ENCODE measurements at regions of chr5 and their contacts with region 1.

Region 1: GRCh38 chr5:146533260-146533857 is 17.4 kb upstream of the GPR151 start:
- DNase-seq: peak; percentile 73
- CTCF ChIP-seq: peak; percentile 83

Region 2: DNA sequence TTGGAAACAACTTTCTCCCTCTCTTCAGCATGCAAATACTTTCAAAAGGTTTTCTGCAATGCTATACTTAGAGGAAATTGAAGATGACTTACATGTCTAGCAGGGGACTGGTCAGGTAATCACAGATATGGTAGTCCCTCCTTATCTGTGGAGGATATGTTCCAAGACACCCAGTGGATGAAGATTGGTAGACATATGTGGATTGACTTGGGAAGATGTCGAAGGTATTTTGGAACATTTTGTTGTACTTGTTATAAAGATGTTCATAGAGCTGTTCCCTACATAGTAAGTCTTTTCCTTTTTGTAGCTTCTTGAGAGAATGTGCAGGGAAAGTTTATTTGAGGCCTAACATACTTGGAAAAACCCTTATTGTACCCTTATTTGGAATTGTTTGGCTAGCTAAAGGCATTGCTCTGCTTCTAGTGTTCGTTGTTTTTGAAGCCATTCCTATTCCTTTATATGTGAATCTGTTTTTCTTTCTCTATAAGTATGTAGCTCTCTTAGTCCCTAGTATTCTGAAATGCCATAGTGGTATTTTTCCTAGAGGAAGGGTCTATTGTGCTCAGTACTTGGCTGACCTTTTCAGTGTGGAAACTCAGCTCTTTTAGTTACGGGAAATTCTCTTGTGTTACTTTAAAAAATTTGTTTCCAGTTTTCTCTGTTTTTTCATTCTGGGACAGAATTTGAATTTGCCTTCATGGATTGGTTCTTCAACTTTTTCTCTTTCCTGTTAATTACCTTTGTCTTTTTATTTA is 43.1 kb before region 1 on chr5:
- CTCF ChIA-PET with region 1: no interaction called
- POLR2A ChIA-PET with region 1: no interaction called
- DNase-seq: no peak
- CTCF ChIP-seq: no peak

Region 3: DNA sequence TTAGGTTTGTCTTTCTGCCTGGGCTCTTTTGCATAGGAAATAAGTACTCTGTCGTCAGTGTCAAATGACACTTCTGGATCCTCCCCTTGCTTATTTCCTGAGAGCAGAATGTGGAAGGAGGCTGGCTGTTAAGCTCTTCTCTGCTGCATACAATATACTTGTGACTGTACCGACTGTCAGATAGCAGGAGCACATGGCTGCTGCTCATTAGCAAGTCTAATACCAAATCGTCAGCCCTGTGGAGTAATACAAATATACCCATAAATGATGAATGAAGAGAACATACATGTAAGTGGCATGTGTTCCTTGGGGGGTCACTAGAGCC is 17.2 kb before region 1 on chr5 and contains the start of gene GPR151:
- CTCF ChIA-PET with region 1: interaction called, 25 read pairs
- POLR2A ChIA-PET with region 1: no interaction called
- DNase-seq: no peak
- CTCF ChIP-seq: no peak

Region 4: GRCh38 chr5:146548781-146549449 is 15.6 kb after region 1 on chr5:
- CTCF ChIA-PET with region 1: interaction called, 75 read pairs
- POLR2A ChIA-PET with region 1: no interaction called
- DNase-seq: no peak
- CTCF ChIP-seq: no peak

Region 5: DNA sequence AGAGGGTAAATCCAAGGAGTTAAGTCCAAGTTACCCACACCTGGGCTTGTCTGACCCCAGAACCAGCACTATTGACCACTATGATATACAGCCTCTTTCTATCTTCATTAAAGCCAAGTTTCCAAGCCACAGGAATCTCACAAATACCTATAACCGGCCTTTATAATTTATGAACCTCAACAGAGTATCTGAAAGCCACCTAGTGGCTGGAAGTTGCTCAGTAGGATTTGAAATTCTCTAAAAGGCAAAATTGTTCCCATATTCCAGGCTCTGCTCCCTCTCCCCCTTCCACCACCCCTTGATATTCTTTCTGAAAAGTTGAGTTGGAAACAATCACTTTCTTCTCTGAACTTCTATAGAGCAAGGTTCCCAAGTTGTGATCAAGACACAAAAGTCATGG is 89.0 kb after region 1 on chr5:
- CTCF ChIA-PET with region 1: no interaction called
- POLR2A ChIA-PET with region 1: no interaction called
- DNase-seq: no peak
- CTCF ChIP-seq: no peak

Region 6: DNA sequence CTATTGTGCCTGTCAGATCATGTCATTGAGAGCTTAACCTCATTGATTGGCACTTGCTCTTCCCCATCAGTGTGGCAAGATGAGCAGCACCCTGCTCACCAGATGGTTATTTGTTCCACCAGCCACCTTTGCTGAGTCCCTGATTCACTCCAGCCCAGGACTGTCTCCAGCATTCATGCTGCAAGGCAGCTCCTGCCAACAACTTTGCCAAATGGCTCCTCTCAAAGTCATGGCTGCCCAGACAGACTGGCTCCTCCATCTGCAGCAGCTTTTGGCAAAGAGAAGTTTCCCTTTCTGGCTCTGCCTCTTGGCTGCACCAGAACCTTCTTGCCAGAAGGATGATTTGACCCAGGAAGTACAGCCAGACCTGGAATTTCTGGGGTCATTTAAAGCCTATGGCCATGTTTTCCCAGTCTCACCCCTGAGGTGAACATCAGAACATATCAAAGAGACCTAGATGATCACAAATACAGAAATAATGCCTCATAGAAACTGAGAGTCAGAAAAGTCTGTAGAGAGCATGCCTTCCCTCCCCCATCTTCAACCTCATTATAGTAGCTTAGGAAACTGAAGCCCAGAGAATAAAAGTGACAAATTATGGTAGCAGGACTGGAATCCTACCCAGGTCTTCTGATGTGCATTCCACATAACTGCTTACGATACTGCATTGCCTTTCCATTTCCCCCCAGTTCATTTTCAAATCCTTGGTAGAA is 334.8 kb after region 1 on chr5:
- CTCF ChIA-PET with region 1: no interaction called
- POLR2A ChIA-PET with region 1: no interaction called
- DNase-seq: no peak
- CTCF ChIP-seq: no peak

Measured in GM10248 (cell line).